Vagina (tissue), 2 donors: ENCODE measurements at regions of chr6 and their contacts with region 1.

Region 1: GRCh38 chr6:103280417-103280816 is 1579.3 kb downstream of the HACE1 start:
- DNase-seq: no peak
- H3K4me3 ChIP-seq: no peak overlapping the region
- H3K27ac ChIP-seq: no peak overlapping the region
- H3K4me1 ChIP-seq: no peaks in the 10 kb centered on the region
- H3K27me3 ChIP-seq: no peaks in the 10 kb centered on the region
- CTCF ChIP-seq: no peak
- POLR2A ChIP-seq: no peak

Region 2: DNA sequence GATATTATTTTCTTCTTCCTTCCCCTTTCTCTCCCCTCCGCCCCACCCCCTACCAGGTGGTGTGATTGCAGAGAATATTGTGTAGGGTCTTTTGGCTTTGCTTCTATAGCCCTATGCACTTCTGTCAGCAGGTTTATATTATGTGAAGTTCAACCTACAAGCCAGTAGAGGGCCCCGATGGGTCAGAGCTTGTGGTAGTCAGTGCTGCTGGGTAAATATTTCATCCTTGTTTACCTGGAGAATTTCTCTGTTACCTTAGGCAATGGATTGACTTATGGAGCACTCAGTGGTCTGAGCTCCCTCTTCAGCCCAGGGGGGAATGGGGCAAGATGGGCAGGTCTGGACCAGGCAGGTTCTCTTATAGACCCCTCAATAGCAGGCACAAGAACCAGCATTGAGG is 1166.0 kb before region 1 on chr6:
- intact Hi-C with region 1: loop called (anchors 10 kb)
- DNase-seq: no peak
- H3K4me3 ChIP-seq: no peak overlapping the region
- H3K27ac ChIP-seq: no peak overlapping the region
- H3K4me1 ChIP-seq: no peaks in the 10 kb centered on the region
- H3K27me3 ChIP-seq: no peaks in the 10 kb centered on the region
- CTCF ChIP-seq: no peak
- POLR2A ChIP-seq: no peak

Region 3: GRCh38 chr6:104682722-104683643 is 1402.6 kb after region 1 on chr6:
- intact Hi-C with region 1: no loop called
- DNase-seq: no peak
- H3K4me3 ChIP-seq: no peak overlapping the region
- H3K27ac ChIP-seq: no peak overlapping the region
- H3K4me1 ChIP-seq: no peaks in the 10 kb centered on the region
- H3K27me3 ChIP-seq: no peaks in the 10 kb centered on the region
- CTCF ChIP-seq: peak in 1 of 3 experiments; percentile 26
- POLR2A ChIP-seq: no peak